Naive thymus-derived CD4-positive, alpha-beta T cell (primary cell): ENCODE measurements at regions of chr2 and their contacts with region 1.

Region 1: DNA sequence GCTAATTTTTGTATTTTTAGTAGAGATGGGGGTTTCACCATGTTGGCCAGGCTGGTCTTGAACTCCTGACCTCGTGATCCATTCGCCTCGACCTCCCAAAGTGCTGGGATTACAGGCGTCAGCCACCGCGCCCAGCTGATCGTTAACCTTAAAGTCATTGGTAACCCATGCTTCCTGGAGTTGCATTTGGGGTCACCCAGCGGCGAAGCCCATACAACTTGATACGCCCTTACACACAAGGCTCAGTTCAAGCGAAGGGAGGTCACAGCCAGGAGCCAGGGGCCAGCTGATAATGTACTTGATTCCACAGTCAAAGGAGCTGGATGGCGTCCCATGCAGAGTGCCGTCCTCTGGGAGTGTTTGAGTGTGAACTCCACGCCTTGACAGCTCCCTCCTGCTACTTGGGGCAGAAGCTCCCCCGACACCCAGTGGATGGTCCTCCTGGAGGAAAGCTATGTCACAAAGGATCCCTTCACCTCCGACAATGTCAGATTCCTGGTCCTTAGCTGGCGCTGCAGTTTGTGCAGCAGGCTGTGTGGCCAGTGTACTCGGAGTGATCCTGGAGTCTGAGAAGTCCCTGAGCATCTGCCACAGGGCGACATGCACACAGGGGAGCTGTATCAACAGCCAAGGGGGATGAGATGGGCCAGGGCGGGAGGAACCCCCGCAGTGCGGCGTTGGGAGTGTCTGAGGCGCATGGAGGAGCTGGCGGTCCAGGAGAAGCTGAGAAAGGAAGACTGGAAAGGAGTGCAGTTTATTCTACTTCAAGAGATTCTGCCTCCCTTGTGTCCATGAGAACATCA is 7.9 kb downstream of the CLHC1 start:
- DNase-seq: peak in 1 of 9 donors; percentile 13
- ATAC-seq: no peak
- H3K4me3 ChIP-seq: no peak overlapping the region
- H3K4me3 Mint-ChIP-seq: peak overlapping the region; percentile 71 to 89 (median 82)
- H3K27ac ChIP-seq: peak overlapping the region; percentile 92
- H3K27ac Mint-ChIP-seq: peak overlapping the region; percentile 72 to 94 (median 89)
- H3K4me1 ChIP-seq: peaks cover 14 to 18% of the 10 kb centered on the region in 2 donors
- H3K4me1 Mint-ChIP-seq: peaks cover 30 to 62% (median 48%) of the 10 kb centered on the region in 7 donors
- H3K27me3 ChIP-seq: no peaks in the 10 kb centered on the region
- H3K27me3 Mint-ChIP-seq: no peaks in the 10 kb centered on the region

Region 2: GRCh38 chr2:55014962-55015939 is 208.9 kb before region 1 on chr2:
- CTCF ChIA-PET with region 1: no interaction called
- POLR2A ChIA-PET with region 1: no interaction called
- intact Hi-C with region 1: loop called in 1 of 2 experiments (anchors 5 kb)
- DNase-seq: peak in 7 of 9 donors; percentile 13 to 56 (median 41)
- ATAC-seq: peak; percentile 60
- H3K4me3 ChIP-seq: no peak overlapping the region
- H3K4me3 Mint-ChIP-seq: no peak overlapping the region
- H3K27ac ChIP-seq: no peak overlapping the region
- H3K27ac Mint-ChIP-seq: peak overlapping the region in 3 of 9 donors; percentile 0 to 47 (median 14)
- H3K4me1 ChIP-seq: peaks cover 9 to 10% of the 10 kb centered on the region in 2 donors
- H3K4me1 Mint-ChIP-seq: peaks cover 19 to 66% (median 41%) of the 10 kb centered on the region in 7 donors
- H3K27me3 ChIP-seq: no peaks in the 10 kb centered on the region
- H3K27me3 Mint-ChIP-seq: no peaks in the 10 kb centered on the region

Region 3: DNA sequence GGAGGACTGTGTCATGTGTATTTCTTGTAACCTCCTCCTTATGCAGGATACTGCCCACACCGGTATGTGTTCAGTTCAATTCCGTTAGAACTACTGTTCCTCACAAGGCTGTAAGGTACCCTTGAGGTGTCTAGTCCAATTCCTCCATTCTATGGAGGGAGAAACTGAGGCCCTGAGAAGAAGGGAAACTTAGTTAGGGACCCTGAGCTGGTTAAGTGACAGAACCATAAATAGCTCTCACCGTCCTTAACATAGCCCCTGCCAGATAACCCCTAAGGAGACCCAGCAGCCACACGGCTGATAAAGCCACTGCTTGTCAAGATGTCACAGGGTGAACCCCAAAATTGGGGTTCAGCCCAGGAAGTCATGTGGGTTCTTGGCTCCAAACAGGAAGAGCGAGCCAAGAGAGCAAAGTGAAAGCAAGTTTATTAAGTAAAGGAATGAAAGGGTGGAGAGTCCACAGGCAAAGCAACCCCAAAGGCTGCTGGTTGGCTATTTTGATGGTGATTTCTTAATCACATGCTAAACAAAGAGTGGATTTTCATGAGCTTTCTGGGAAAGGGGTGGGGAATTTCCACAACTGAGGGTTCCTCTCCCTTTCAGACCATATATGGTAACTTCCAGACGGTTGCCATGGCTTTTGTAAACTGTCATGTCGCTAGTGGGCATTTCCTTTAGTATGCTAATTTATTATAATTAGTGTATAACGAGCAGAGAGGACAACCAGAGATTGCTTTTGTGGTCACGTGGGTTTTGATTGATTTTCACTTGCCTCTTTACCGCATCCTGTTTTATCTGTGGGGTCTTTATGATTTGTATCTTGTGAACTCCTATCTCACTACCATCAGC is 90.5 kb before region 1 on chr2:
- CTCF ChIA-PET with region 1: no interaction called
- POLR2A ChIA-PET with region 1: interaction called, 4 read pairs
- intact Hi-C with region 1: loop called (anchors 2 to 5 kb)
- DNase-seq: peak; percentile 17 to 78 (median 52)
- ATAC-seq: peak; percentile 91
- H3K4me3 ChIP-seq: peak overlapping the region; percentile 55
- H3K4me3 Mint-ChIP-seq: peak overlapping the region; percentile 83 to 94 (median 88)
- H3K27ac ChIP-seq: peak overlapping the region; percentile 76
- H3K27ac Mint-ChIP-seq: peak overlapping the region; percentile 91 to 98 (median 97)
- H3K4me1 ChIP-seq: peaks cover 14 to 22% of the 10 kb centered on the region in 2 donors
- H3K4me1 Mint-ChIP-seq: peaks cover 19 to 49% (median 39%) of the 10 kb centered on the region in 7 donors
- H3K27me3 ChIP-seq: no peaks in the 10 kb centered on the region
- H3K27me3 Mint-ChIP-seq: no peaks in the 10 kb centered on the region

Region 4: DNA sequence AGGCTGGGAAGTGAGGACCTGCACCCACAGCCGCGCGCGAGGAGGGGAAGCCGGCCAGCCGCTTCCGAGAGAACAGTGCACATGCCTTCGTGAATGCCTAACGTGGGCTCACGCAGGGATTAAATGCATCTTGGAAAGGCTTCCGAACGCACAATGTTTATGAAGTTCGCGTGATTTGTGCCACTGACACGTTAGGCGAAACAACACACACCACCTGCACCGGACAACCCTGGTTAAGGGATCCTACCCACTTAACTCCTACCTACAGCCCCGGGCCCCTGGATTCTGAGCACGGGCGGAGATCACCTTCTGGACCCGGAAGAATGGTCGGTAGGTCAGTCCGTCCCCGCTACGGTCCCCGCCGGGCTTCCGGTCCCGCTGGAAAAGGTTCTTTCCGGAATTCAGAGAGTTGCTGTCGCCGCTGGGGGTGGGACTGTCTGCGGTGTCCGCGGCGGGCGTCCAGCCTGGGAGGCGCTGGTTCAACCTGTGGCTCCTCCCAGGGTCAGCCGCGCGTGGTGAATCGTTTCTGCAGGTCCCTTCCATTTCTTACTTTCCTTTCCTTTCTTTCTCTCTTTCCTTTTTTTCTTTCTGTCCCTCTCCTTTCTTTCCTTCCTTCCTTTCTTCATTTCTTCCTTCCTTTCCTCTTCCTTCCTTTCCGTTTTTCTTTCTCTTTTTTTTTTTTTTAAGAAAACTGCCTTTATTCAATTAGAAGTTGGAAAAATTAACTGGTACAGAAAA is 44.9 kb after region 1 on chr2 and contains the start of gene MTIF2:
- CTCF ChIA-PET with region 1: no interaction called
- POLR2A ChIA-PET with region 1: interaction called, 5 read pairs
- intact Hi-C with region 1: loop called in 1 of 2 experiments (anchors 2 kb)
- DNase-seq: peak; percentile 64 to 90 (median 75)
- ATAC-seq: peak; percentile 97
- H3K4me3 ChIP-seq: peak within 1 kb of the TSS; percentile 84
- H3K4me3 Mint-ChIP-seq: peak within 1 kb of the TSS; percentile 78 to 97 (median 94)
- H3K27ac ChIP-seq: peak within 1 kb of the TSS; percentile 79
- H3K27ac Mint-ChIP-seq: peak within 1 kb of the TSS; percentile 94 to 97 (median 96)
- H3K4me1 ChIP-seq: peaks cover 13 to 16% of the 10 kb centered on the region in 2 donors
- H3K4me1 Mint-ChIP-seq: peaks cover 15 to 35% (median 27%) of the 10 kb centered on the region in 7 donors
- H3K27me3 ChIP-seq: no peaks in the 10 kb centered on the region
- H3K27me3 Mint-ChIP-seq: peaks cover 0 to 5% (median 0%) of the 10 kb centered on the region in 5 donors
- total RNA-seq, gene MTIF2: 23.0 to 35.5 (median 28.0) TPM

Region 5: GRCh38 chr2:55431982-55432627 is 207.9 kb after region 1 on chr2:
- CTCF ChIA-PET with region 1: interaction called, 3 read pairs
- POLR2A ChIA-PET with region 1: no interaction called
- intact Hi-C with region 1: loop called in 1 of 2 experiments (anchors 1 kb)
- DNase-seq: peak in 6 of 9 donors; percentile 6 to 54 (median 32)
- ATAC-seq: peak; percentile 66
- H3K4me3 ChIP-seq: no peak overlapping the region
- H3K4me3 Mint-ChIP-seq: no peak overlapping the region
- H3K27ac ChIP-seq: no peak overlapping the region
- H3K27ac Mint-ChIP-seq: peak overlapping the region in 1 of 9 donors; percentile 39
- H3K4me1 ChIP-seq: no peaks in the 10 kb centered on the region
- H3K4me1 Mint-ChIP-seq: peaks cover 0 to 7% (median 2%) of the 10 kb centered on the region in 7 donors
- H3K27me3 ChIP-seq: no peaks in the 10 kb centered on the region
- H3K27me3 Mint-ChIP-seq: peaks cover 0 to 15% (median 0%) of the 10 kb centered on the region in 5 donors

Region 6: GRCh38 chr2:55452879-55453278 is 228.7 kb after region 1 on chr2:
- CTCF ChIA-PET with region 1: no interaction called
- POLR2A ChIA-PET with region 1: no interaction called
- intact Hi-C with region 1: no loop called
- DNase-seq: no peak
- ATAC-seq: no peak
- H3K4me3 ChIP-seq: no peak overlapping the region
- H3K4me3 Mint-ChIP-seq: no peak overlapping the region
- H3K27ac ChIP-seq: no peak overlapping the region
- H3K27ac Mint-ChIP-seq: no peak overlapping the region
- H3K4me1 ChIP-seq: no peaks in the 10 kb centered on the region
- H3K4me1 Mint-ChIP-seq: no peaks in the 10 kb centered on the region
- H3K27me3 ChIP-seq: no peaks in the 10 kb centered on the region
- H3K27me3 Mint-ChIP-seq: no peaks in the 10 kb centered on the region